ENCODE measurements at regions of chr1 and their contacts with region 1.

Region 1: GRCh38 chr1:112337028-112337531 is 58.9 kb upstream of the CTTNBP2NL start:
- DNase-seq: peak; percentile 55
- H3K4me3 Mint-ChIP-seq: no peak overlapping the region
- H3K27ac Mint-ChIP-seq: peak overlapping the region; percentile 36
- H3K4me1 Mint-ChIP-seq: peaks cover 26% of the 10 kb centered on the region
- H3K27me3 Mint-ChIP-seq: peaks cover 12% of the 10 kb centered on the region
- CTCF ChIP-seq: peak; percentile 79

Region 2: DNA sequence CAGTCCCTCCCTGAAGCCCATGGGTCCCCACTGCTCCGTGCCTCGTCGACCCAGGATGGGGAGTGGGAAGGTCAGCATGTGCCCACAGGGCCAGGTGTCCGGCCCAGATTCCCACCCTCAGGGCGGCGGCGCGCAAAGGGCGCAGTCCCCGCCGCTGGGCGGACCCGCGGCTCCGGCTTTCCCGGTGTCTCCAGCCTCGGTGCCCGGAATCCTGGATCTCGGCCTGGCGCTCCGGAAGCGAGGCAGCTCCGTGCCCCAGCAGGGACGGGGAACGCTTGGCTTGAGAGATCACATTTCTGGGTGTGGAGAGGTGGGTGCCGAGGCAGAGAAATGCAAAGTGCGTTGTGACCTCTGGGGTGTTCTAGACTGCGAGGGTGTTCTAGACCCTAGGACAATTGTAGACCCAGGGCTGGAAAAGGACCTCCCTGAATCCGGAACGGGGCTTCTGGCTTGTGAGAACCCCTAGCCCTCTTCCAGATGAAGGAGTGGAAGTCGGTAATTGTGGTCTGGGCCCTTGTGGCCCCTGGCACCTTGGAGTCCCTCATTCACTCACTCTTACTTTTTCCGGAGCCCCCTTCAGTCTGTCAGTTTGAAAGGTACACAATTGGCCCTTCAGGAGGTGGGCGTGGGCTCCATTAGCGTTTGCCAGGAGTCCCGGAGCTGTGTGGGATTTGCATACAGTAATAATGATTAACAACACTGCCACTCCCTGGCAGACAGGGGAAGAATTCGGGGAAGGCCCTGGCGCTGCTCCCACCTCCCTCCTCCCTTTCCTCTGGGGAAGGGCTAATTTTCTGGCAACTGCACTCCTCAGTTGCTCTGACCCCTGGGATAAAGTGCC is 346.0 kb before region 1 on chr1:
- CTCF ChIA-PET with region 1: interaction called, 3 read pairs
- POLR2A ChIA-PET with region 1: no interaction called
- intact Hi-C with region 1: loop called (anchors 1 kb)
- DNase-seq: peak; percentile 59
- H3K4me3 Mint-ChIP-seq: peak overlapping the region; percentile 76
- H3K27ac Mint-ChIP-seq: no peak overlapping the region
- H3K4me1 Mint-ChIP-seq: peaks cover 17% of the 10 kb centered on the region
- H3K27me3 Mint-ChIP-seq: peaks cover 56% of the 10 kb centered on the region
- CTCF ChIP-seq: peak; percentile 34

Region 3: GRCh38 chr1:112308716-112309115 is 28.4 kb before region 1 on chr1:
- CTCF ChIA-PET with region 1: interaction called, 12 read pairs
- POLR2A ChIA-PET with region 1: interaction called, 3 read pairs
- intact Hi-C with region 1: no loop called
- DNase-seq: no peak
- H3K4me3 Mint-ChIP-seq: no peak overlapping the region
- H3K27ac Mint-ChIP-seq: no peak overlapping the region
- H3K4me1 Mint-ChIP-seq: no peaks in the 10 kb centered on the region
- H3K27me3 Mint-ChIP-seq: peaks cover 46% of the 10 kb centered on the region
- CTCF ChIP-seq: no peak

Region 4: GRCh38 chr1:112317140-112317539 is 19.9 kb before region 1 on chr1:
- CTCF ChIA-PET with region 1: interaction called, 20 read pairs
- POLR2A ChIA-PET with region 1: interaction called, 10 read pairs
- intact Hi-C with region 1: no loop called
- DNase-seq: no peak
- H3K4me3 Mint-ChIP-seq: no peak overlapping the region
- H3K27ac Mint-ChIP-seq: no peak overlapping the region
- H3K4me1 Mint-ChIP-seq: peaks cover 23% of the 10 kb centered on the region
- H3K27me3 Mint-ChIP-seq: no peaks in the 10 kb centered on the region
- CTCF ChIP-seq: no peak

Region 5: GRCh38 chr1:112322983-112323678 is 13.9 kb before region 1 on chr1:
- CTCF ChIA-PET with region 1: interaction called, 20 read pairs
- POLR2A ChIA-PET with region 1: interaction called, 10 read pairs
- intact Hi-C with region 1: no loop called
- DNase-seq: no peak
- H3K4me3 Mint-ChIP-seq: no peak overlapping the region
- H3K27ac Mint-ChIP-seq: no peak overlapping the region
- H3K4me1 Mint-ChIP-seq: peaks cover 23% of the 10 kb centered on the region
- H3K27me3 Mint-ChIP-seq: no peaks in the 10 kb centered on the region
- CTCF ChIP-seq: no peak

Region 6: GRCh38 chr1:112369392-112370285 is 32.6 kb after region 1 on chr1:
- CTCF ChIA-PET with region 1: interaction called, 17 read pairs
- POLR2A ChIA-PET with region 1: no interaction called
- intact Hi-C with region 1: no loop called
- DNase-seq: peak; percentile 86
- H3K4me3 Mint-ChIP-seq: no peak overlapping the region
- H3K27ac Mint-ChIP-seq: no peak overlapping the region
- H3K4me1 Mint-ChIP-seq: peaks cover 6% of the 10 kb centered on the region
- H3K27me3 Mint-ChIP-seq: peaks cover 19% of the 10 kb centered on the region
- CTCF ChIP-seq: peak; percentile 98

Measured in MCF 10A (cell line).